ENCODE measurements at regions of chr2 and their contacts with region 1.

Region 1: GRCh38 chr2:88627056-88627855 is at the start of gene EIF2AK3:
- DNase-seq: peak; percentile 95
- ATAC-seq: peak; percentile 92
- H3K4me3 Mint-ChIP-seq: no peak within 1 kb of the TSS
- H3K27ac Mint-ChIP-seq: peak within 1 kb of the TSS; percentile 91
- H3K4me1 Mint-ChIP-seq: peaks cover 23% of the 10 kb centered on the region
- H3K27me3 Mint-ChIP-seq: no peaks in the 10 kb centered on the region
- total RNA-seq, gene EIF2AK3: 15.9 to 25.1 TPM

Region 2: DNA sequence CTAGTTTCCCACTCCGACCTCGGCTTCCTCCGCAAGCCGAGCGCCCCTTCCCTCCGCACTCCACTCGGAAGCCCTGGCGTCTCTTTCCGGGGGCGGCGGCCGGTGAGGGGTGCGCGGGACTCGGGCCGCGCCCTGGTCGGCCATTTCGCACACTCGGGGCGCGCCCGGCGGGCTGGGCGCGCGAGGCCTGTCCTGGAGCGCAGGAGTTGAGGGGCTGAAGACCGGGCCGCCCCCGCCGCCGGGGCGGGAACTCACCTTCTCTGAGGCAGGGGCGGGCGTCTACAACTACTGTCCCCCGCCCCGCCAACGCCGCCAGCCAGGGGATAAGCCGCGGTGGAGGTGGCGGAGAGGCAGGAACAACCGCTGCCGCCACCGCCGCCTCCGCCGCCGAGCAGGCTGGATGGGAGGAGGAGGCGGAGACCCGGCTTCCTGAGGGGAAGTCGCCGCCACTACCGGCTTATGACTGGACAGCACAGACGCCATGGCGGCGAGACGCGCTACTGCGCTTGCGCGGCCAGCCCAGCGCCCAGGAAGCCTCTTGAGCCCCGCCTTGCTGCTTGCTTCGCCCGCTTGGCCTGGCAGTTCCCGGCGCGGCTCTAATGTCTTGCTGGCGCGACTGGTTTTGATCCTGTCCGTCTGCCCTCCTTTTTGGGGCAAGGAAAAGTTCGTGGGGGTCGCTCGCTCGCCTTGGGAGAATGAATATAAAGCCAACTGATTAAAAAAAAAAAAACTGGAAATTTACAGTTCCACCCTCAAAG is 571.7 kb before region 1 on chr2 and contains the start of gene KRCC1:
- CTCF ChIA-PET with region 1: no interaction called
- POLR2A ChIA-PET with region 1: no interaction called
- intact Hi-C with region 1: loop called in 1 of 2 experiments (anchors 5 kb)
- DNase-seq: peak; percentile 96
- ATAC-seq: peak; percentile 93
- H3K4me3 Mint-ChIP-seq: peak within 1 kb of the TSS; percentile 92
- H3K27ac Mint-ChIP-seq: peak within 1 kb of the TSS; percentile 99
- H3K4me1 Mint-ChIP-seq: peaks cover 58% of the 10 kb centered on the region
- H3K27me3 Mint-ChIP-seq: no peaks in the 10 kb centered on the region
- total RNA-seq, gene KRCC1: 11.5 to 12.9 TPM

Region 3: DNA sequence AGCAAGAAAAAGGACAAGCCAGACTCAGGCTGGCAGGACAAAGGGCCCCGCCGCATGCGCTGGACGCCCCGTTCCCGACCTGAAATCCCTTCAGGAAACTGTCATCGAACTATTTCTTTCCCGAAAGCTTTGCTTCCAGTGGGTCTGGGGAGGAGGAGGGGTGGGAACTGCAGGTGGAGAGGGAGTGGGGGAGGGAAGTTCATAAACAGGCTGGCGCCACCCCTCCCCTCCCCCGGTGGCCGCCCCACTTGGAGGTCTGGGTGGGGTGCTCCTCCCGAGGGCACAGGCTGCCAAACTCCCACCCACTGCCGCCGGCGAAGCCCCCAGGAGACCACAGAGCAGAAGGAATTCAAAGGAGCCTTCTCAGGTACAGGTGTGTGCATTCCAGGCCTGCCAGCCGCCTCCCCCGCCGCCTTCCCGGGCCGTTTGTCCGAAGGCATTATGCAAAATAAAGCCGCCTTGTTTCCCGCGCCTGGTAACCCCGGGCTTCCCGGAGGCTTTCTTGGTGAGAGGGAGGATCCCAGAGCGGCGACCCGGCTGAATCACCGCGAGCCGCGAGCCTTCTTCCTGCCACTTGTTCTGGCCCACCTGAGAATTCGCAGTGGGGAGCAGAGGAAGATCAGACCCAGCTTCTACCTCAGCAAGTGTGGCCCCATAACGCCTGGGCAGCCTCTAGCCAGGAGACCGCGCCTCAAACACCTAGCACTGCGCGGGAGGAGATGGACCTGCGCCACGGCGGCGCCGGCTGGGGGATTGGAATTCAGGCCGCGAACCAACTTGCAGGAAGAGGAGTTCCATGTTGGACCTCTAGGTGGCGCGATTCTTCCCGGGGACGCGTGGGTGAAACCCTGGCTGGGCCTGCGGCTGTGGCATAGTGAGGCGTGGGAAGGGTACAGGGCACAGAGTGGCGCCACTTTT is 276.7 kb before region 1 on chr2:
- CTCF ChIA-PET with region 1: no interaction called
- POLR2A ChIA-PET with region 1: no interaction called
- intact Hi-C with region 1: no loop called
- DNase-seq: peak; percentile 85
- ATAC-seq: peak; percentile 55
- H3K4me3 Mint-ChIP-seq: peak overlapping the region; percentile 40
- H3K27ac Mint-ChIP-seq: no peak overlapping the region
- H3K4me1 Mint-ChIP-seq: peaks cover 3% of the 10 kb centered on the region
- H3K27me3 Mint-ChIP-seq: peaks cover 32% of the 10 kb centered on the region

Region 4: DNA sequence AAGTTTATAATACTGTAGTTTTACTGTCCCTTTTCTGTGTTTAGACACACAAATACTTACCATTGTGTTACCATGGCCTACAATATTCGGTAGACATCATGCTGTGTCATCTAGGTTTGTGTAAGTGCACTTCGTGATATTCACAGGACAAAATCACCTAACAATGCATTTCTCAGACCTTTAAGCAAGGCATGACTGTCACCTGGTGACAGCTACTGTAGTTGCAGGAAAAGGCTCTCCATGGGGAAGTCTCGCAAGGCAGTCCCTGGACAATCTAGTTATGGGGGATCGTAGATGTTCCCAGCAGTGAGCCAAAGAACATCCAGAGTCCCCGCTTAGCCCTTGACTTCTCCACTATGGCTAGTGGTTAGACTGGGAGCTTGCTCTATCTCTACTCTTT is 73.1 kb before region 1 on chr2:
- CTCF ChIA-PET with region 1: no interaction called
- POLR2A ChIA-PET with region 1: no interaction called
- intact Hi-C with region 1: no loop called
- DNase-seq: no peak
- ATAC-seq: no peak
- H3K4me3 Mint-ChIP-seq: no peak overlapping the region
- H3K27ac Mint-ChIP-seq: no peak overlapping the region
- H3K4me1 Mint-ChIP-seq: peaks cover 2% of the 10 kb centered on the region
- H3K27me3 Mint-ChIP-seq: peaks cover 14% of the 10 kb centered on the region

Region 5: DNA sequence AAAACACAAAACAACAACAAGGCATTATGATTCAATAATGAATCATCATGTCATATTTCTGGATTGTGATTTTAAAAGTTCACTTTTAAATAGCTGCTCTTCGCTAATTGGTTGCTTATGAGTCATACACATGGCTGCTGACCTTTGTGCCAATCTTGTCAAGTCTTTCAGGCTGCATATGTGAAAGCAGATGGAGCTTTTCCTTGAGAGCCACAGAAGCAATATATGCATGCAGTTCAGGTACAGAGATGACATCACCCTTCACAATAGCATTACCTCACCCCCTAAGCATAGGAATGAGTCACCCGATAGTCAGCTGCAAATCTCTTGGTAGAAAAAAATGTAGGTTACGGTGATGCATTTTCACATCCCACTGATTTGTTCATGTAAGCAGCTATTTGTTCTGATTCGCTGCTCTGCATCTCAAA is 27.2 kb before region 1 on chr2:
- CTCF ChIA-PET with region 1: no interaction called
- POLR2A ChIA-PET with region 1: interaction called, 19 read pairs
- intact Hi-C with region 1: loop called (anchors 1 kb)
- DNase-seq: peak; percentile 59
- ATAC-seq: peak; percentile 100
- H3K4me3 Mint-ChIP-seq: no peak overlapping the region
- H3K27ac Mint-ChIP-seq: no peak overlapping the region
- H3K4me1 Mint-ChIP-seq: peaks cover 43% of the 10 kb centered on the region
- H3K27me3 Mint-ChIP-seq: no peaks in the 10 kb centered on the region

Region 6: GRCh38 chr2:88669371-88670214 is 42.3 kb after region 1 on chr2:
- CTCF ChIA-PET with region 1: interaction called, 4 read pairs
- POLR2A ChIA-PET with region 1: no interaction called
- intact Hi-C with region 1: loop called (anchors 1 to 2 kb)
- DNase-seq: peak; percentile 43
- ATAC-seq: peak; percentile 71
- H3K4me3 Mint-ChIP-seq: no peak overlapping the region
- H3K27ac Mint-ChIP-seq: no peak overlapping the region
- H3K4me1 Mint-ChIP-seq: no peaks in the 10 kb centered on the region
- H3K27me3 Mint-ChIP-seq: peaks cover 3% of the 10 kb centered on the region

Region 7: DNA sequence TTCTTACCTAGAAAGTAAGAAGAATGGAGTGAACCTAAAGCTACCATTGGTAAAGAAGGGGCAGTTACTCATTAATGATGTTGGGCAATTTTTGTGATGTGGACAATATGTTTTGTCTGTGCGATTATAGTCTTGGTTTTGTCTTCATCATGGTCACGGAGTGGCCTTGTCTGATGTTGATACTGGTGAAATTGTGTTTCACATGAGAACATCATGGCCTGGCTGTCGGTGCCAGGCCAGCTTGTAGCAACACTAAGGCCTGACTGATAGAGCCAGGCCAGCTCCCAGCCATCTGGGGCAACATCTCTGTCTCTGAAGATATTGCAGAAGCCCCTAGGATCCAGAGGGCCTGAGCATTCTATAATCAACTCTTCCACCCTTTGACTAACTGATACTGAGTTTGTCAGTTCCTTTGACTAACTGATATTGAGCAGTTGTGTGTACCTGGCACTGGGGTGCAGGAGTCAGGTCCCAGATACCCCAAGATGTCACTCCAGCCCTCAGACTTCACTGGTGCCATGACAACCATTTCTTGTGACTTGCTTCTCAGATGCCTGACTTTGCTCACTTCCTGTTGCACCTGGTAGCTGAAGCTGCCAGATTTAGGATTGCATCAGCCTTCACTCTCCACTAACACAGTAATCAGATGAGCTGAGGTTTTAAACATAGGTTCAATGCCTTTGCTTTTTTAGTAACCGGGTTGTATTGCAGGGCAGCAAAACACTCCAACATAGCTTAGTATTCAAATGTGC is 126.8 kb after region 1 on chr2:
- CTCF ChIA-PET with region 1: no interaction called
- POLR2A ChIA-PET with region 1: no interaction called
- intact Hi-C with region 1: loop called in 1 of 2 experiments (anchors 5 kb)
- DNase-seq: peak; percentile 64
- ATAC-seq: peak; percentile 92
- H3K4me3 Mint-ChIP-seq: no peak overlapping the region
- H3K27ac Mint-ChIP-seq: peak overlapping the region; percentile 99
- H3K4me1 Mint-ChIP-seq: peaks cover 54% of the 10 kb centered on the region
- H3K27me3 Mint-ChIP-seq: no peaks in the 10 kb centered on the region

Measured in activated CD4-positive, alpha-beta T cell treated with anti-CD3 and anti-CD28 coated beads for 36 hours (primary cell).